ENCODE measurements at regions of chr7 and their contacts with region 1.

Region 1: GRCh38 chr7:116173051-116174028 is 37.0 kb upstream of the TES start:
- DNase-seq: peak; percentile 36 to 72 (median 41)
- ATAC-seq: peak; percentile 79
- H3K4me3 ChIP-seq: no peak overlapping the region
- H3K27ac ChIP-seq: no peak overlapping the region
- H3K4me1 ChIP-seq: no peaks in the 10 kb centered on the region
- H3K27me3 ChIP-seq: no peaks in the 10 kb centered on the region
- CTCF ChIP-seq: peak; percentile 48 to 89 (median 54); a peak in 5 of 6 replicates
- EP300 ChIP-seq: no peak
- POLR2A ChIP-seq: no peak
- RAD21 ChIP-seq: peak; percentile 95 to 96

Region 2: GRCh38 chr7:116138202-116138801 is 35.0 kb before region 1 on chr7:
- CTCF ChIA-PET with region 1: no interaction called
- POLR2A ChIA-PET with region 1: interaction called, 3 read pairs
- in situ Hi-C with region 1: no loop called
- intact Hi-C with region 1: loop called (anchors 2 kb)
- DNase-seq: peak; percentile 52 to 70 (median 58)
- ATAC-seq: peak; percentile 97
- H3K4me3 ChIP-seq: no peak overlapping the region
- H3K27ac ChIP-seq: no peak overlapping the region
- H3K4me1 ChIP-seq: no peaks in the 10 kb centered on the region
- H3K27me3 ChIP-seq: no peaks in the 10 kb centered on the region
- CTCF ChIP-seq: peak; percentile 61 to 84 (median 76)
- EP300 ChIP-seq: no peak
- POLR2A ChIP-seq: no peak
- RAD21 ChIP-seq: peak; percentile 83 to 86

Region 3: DNA sequence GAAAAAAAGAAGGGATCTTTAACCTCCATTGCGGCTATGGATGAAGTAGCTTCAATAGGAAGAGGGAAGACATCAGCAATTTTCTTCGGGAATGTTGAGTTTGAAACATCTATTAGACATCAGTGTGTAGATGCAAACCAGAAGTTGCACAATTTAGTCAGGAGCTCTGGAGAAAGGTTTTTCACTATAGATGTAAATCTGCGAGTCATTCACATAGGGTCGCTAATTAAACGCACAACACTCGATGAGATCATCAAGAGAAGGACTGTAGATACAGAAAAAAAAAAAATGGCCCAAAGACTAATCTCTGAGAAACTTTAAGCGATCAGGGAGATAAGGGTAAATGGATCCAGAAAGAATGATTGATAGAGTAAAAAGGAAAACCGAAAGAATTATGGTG is 24.7 kb before region 1 on chr7:
- CTCF ChIA-PET with region 1: no interaction called
- POLR2A ChIA-PET with region 1: no interaction called
- in situ Hi-C with region 1: no loop called
- intact Hi-C with region 1: no loop called
- DNase-seq: no peak
- ATAC-seq: no peak
- H3K4me3 ChIP-seq: no peak overlapping the region
- H3K27ac ChIP-seq: no peak overlapping the region
- H3K4me1 ChIP-seq: no peaks in the 10 kb centered on the region
- H3K27me3 ChIP-seq: no peaks in the 10 kb centered on the region
- CTCF ChIP-seq: no peak
- EP300 ChIP-seq: no peak
- POLR2A ChIP-seq: no peak
- RAD21 ChIP-seq: no peak

Region 4: DNA sequence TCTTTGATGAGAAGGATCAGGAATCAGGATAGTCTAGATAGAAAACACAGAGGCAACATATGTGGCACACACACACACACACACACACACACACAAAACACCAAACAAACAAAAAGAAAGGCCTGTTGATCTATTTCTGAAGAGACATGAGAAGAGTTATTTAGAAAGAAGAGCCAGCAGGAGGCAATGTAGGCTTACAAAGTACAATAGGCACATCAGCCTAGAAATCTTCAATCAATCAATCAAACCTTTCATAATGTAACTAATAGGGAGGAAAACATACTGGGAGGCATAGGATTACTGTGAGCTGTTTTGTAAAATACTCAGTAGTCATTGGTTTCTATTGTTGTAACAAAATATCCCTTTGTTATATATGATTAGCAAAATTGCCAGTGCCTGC is 10.3 kb before region 1 on chr7:
- CTCF ChIA-PET with region 1: no interaction called
- POLR2A ChIA-PET with region 1: no interaction called
- in situ Hi-C with region 1: no loop called
- intact Hi-C with region 1: no loop called
- DNase-seq: no peak
- ATAC-seq: no peak
- H3K4me3 ChIP-seq: no peak overlapping the region
- H3K27ac ChIP-seq: no peak overlapping the region
- H3K4me1 ChIP-seq: no peaks in the 10 kb centered on the region
- H3K27me3 ChIP-seq: no peaks in the 10 kb centered on the region
- CTCF ChIP-seq: peak in 1 of 3 experiments; percentile 29; a peak in 2 of 6 replicates
- EP300 ChIP-seq: no peak
- POLR2A ChIP-seq: no peak
- RAD21 ChIP-seq: peak in 1 of 2 experiments; percentile 56; a peak in 2 of 4 replicates

Region 5: GRCh38 chr7:116236020-116236630 is 62.8 kb after region 1 on chr7:
- CTCF ChIA-PET with region 1: interaction called, 50 read pairs
- POLR2A ChIA-PET with region 1: no interaction called
- in situ Hi-C with region 1: loop called (anchors 5 kb)
- intact Hi-C with region 1: loop called (anchors 2 kb)
- DNase-seq: peak; percentile 40 to 70 (median 42)
- ATAC-seq: peak; percentile 59
- H3K4me3 ChIP-seq: no peak overlapping the region
- H3K27ac ChIP-seq: no peak overlapping the region
- H3K4me1 ChIP-seq: peaks cover 3 to 13% of the 10 kb centered on the region in 2 experiments; a peak in 4 of 5 replicates
- H3K27me3 ChIP-seq: no peaks in the 10 kb centered on the region
- CTCF ChIP-seq: peak; percentile 46 to 81 (median 64); a peak in 5 of 6 replicates
- EP300 ChIP-seq: no peak
- POLR2A ChIP-seq: no peak
- RAD21 ChIP-seq: peak; percentile 82 to 86

Region 6: GRCh38 chr7:116340943-116341907 is 167.9 kb after region 1 on chr7:
- CTCF ChIA-PET with region 1: no interaction called
- POLR2A ChIA-PET with region 1: no interaction called
- in situ Hi-C with region 1: no loop called
- intact Hi-C with region 1: loop called (anchors 5 kb)
- DNase-seq: peak in 2 of 4 experiments; percentile 32 to 53
- ATAC-seq: peak; percentile 96
- H3K4me3 ChIP-seq: no peak overlapping the region
- H3K27ac ChIP-seq: no peak overlapping the region
- H3K4me1 ChIP-seq: peaks cover 0 to 16% of the 10 kb centered on the region in 2 experiments; a peak in 3 of 5 replicates
- H3K27me3 ChIP-seq: no peaks in the 10 kb centered on the region
- CTCF ChIP-seq: peak; percentile 57 to 59 (median 57)
- EP300 ChIP-seq: no peak
- POLR2A ChIP-seq: no peak
- RAD21 ChIP-seq: peak; percentile 74 to 79

Region 7: GRCh38 chr7:116802746-116803152 is 629.4 kb after region 1 on chr7:
- CTCF ChIA-PET with region 1: interaction called, 3 read pairs
- POLR2A ChIA-PET with region 1: no interaction called
- in situ Hi-C with region 1: loop called (anchors 5 kb)
- intact Hi-C with region 1: no loop called
- DNase-seq: peak; percentile 62 to 73 (median 70)
- ATAC-seq: peak; percentile 92
- H3K4me3 ChIP-seq: no peak overlapping the region
- H3K27ac ChIP-seq: no peak overlapping the region
- H3K4me1 ChIP-seq: no peaks in the 10 kb centered on the region
- H3K27me3 ChIP-seq: peaks cover 8 to 22% of the 10 kb centered on the region in 2 experiments; a peak in 4 of 5 replicates
- CTCF ChIP-seq: peak; percentile 74 to 89 (median 82)
- EP300 ChIP-seq: no peak
- POLR2A ChIP-seq: no peak
- RAD21 ChIP-seq: peak; percentile 64 to 79

Region 8: GRCh38 chr7:116809636-116810266 is 636.4 kb after region 1 on chr7:
- CTCF ChIA-PET with region 1: interaction called, 10 read pairs
- POLR2A ChIA-PET with region 1: no interaction called
- in situ Hi-C with region 1: loop called (anchors 5 kb)
- intact Hi-C with region 1: loop called (anchors 2 kb)
- DNase-seq: peak; percentile 41 to 82 (median 54)
- ATAC-seq: peak; percentile 96
- H3K4me3 ChIP-seq: no peak overlapping the region
- H3K27ac ChIP-seq: no peak overlapping the region
- H3K4me1 ChIP-seq: no peaks in the 10 kb centered on the region
- H3K27me3 ChIP-seq: peaks cover 9 to 19% of the 10 kb centered on the region in 2 experiments; a peak in 4 of 5 replicates
- CTCF ChIP-seq: peak; percentile 65 to 89 (median 71)
- EP300 ChIP-seq: no peak
- POLR2A ChIP-seq: no peak
- RAD21 ChIP-seq: peak; percentile 92 to 97

Region 9: DNA sequence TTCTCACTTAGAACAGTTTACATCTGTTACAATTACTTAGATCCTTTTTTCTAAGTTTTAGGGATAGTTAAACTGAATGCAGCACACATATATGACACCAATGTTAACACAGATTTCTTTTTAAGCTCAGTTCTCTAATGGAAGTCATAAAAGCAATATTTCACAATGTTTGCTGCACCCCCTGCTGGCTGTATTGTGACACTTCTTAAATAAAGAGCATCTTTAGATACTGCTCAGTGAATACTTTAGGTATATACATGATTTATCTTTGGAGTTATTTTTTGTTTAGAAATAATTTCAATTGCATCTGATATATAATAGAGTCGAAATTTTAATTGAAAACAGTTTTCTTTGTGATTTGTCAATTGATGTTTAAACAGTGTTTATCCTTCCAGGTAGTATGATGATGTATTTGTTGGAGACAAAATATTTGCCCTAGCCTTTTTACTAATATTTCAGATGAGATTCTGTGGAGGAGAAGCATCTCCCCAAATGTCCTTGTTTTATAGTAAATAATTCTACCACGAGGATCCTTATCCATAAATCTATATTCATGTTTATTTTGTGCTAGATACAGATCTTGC is 954.3 kb after region 1 on chr7:
- CTCF ChIA-PET with region 1: no interaction called
- POLR2A ChIA-PET with region 1: no interaction called
- in situ Hi-C with region 1: no loop called
- intact Hi-C with region 1: loop called (anchors 10 kb)
- DNase-seq: peak; percentile 34 to 80 (median 55)
- ATAC-seq: peak; percentile 79
- H3K4me3 ChIP-seq: no peak overlapping the region
- H3K27ac ChIP-seq: no peak overlapping the region
- H3K4me1 ChIP-seq: peaks cover 0 to 15% of the 10 kb centered on the region in 2 experiments; a peak in 3 of 5 replicates
- H3K27me3 ChIP-seq: no peaks in the 10 kb centered on the region
- CTCF ChIP-seq: peak; percentile 57 to 90 (median 70); a peak in 5 of 6 replicates
- EP300 ChIP-seq: no peak
- POLR2A ChIP-seq: no peak
- RAD21 ChIP-seq: peak; percentile 82 to 90

Measured in K562 (cell line).